ENCODE measurements at regions of chr3 and their contacts with region 1.

Region 1: GRCh38 chr3:40179016-40179415 is 130.5 kb upstream of the EIF1B start:
- DNase-seq: peak in 1 of 2 donors; percentile 80
- H3K4me3 ChIP-seq: no peak overlapping the region
- H3K27ac ChIP-seq: no peak overlapping the region
- H3K4me1 ChIP-seq: no peaks in the 10 kb centered on the region
- H3K27me3 ChIP-seq: no peaks in the 10 kb centered on the region
- CTCF ChIP-seq: peak; percentile 31 to 73 (median 44)
- POLR2A ChIP-seq: no peak

Region 2: DNA sequence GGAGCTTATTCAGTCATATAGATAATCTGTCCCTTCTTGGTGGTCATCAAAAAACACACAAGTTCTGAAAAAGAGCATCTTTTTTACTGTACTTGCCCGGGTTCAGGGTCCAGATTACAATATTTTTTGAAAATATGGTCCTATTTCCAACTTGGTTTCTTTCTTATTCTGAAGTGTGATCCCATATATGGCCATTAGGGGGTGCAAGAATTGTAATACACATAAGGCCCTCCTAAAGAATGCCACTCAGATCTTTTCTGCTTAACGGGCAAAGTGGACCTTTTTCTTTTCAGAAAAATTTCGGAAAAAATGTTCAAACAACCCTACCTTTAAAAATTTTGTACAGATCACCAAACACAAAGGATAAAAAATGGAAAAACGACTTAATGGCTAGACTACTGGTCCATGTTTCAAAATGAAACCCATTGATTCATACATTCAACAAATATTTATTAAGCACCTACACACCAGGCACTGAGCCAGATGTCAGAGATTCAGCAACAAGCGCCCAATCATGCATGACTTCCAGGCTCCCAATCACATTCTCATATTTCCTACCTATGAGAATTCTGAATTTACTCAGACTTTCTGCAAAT is 471.6 kb before region 1 on chr3:
- intact Hi-C with region 1: loop called (anchors 5 kb)
- DNase-seq: no peak
- H3K4me3 ChIP-seq: no peak overlapping the region
- H3K27ac ChIP-seq: no peak overlapping the region
- H3K4me1 ChIP-seq: no peaks in the 10 kb centered on the region
- H3K27me3 ChIP-seq: no peaks in the 10 kb centered on the region
- CTCF ChIP-seq: peak; percentile 4 to 45 (median 17)
- POLR2A ChIP-seq: no peak

Measured in vagina (tissue), 2 donors.